ENCODE measurements at regions of chr2 and their contacts with region 1.

Region 1: DNA sequence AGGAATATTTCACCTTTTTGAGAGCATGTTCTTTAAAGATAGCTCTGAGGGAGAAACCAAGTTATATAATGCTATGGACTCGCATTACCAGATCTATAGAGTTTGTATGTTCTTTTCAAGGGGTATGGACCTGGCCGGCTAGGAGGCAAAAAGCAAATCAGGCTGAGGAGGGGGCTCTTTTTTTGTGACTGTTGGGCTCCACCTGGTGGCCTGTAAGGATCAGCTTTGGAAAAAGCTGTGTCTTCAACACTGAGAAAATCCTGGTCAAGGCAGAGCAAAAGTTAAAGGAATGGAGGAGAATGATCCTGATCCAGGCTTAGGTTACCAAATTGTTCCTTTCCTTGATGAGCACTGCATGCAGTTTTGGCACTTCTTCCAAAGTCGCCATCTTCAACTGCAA is 180.5 kb downstream of the DIS3L2 start:
- DNase-seq: peak; percentile 68
- H3K4me3 Mint-ChIP-seq: no peak overlapping the region
- H3K27ac Mint-ChIP-seq: no peak overlapping the region
- H3K4me1 Mint-ChIP-seq: peaks cover 10% of the 10 kb centered on the region
- H3K27me3 Mint-ChIP-seq: no peaks in the 10 kb centered on the region

Region 2: GRCh38 chr2:231900972-231901371 is 241.1 kb before region 1 on chr2:
- intact Hi-C with region 1: loop called (anchors 1 kb)
- DNase-seq: no peak
- H3K4me3 Mint-ChIP-seq: no peak overlapping the region
- H3K27ac Mint-ChIP-seq: no peak overlapping the region
- H3K4me1 Mint-ChIP-seq: no peaks in the 10 kb centered on the region
- H3K27me3 Mint-ChIP-seq: peaks cover 6% of the 10 kb centered on the region

Region 3: DNA sequence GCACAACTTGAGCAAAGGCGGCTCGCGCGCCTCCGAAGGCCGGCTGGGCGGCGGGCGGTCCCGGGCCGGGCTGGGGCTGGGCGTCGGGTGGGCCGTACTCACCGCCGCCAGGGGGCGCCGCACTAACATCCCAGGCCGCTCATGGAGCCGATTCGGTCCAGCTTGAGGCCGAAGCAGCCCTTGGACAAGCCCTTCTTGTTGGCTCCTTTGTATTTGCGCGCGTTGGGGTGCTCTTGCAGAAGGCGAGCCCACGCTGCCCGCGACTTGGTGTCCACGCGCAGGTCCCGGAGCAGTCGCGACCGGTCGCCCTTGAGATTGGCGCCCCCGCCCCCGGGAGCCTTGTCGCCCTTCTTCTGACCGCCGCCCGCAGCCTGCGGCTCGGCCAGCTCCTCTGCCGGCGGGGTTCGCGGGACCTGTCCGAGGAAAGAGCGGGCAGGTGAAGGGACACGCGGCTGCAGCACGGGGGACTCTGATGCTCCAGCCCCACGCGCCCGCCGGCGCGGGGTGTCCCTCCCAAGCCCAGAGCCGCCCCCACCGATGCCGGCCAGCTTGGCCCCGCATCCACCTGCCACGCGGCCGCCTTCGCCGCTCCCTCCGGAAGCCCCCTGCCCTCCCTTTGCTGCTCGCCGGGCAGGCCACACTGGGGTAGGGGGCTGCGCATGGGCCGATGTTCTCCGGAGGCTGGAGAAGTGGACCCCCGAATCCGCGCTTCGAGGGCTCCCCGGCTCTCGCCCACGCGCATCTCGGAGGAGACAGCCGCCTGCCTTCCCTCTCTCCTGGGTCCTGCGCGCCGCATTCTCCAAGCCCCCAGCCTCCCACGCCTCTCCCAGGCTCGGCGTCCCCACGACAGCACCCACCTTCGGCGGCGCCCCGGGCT is 216.5 kb before region 1 on chr2:
- intact Hi-C with region 1: loop called (anchors 1 kb)
- DNase-seq: peak; percentile 91
- H3K4me3 Mint-ChIP-seq: peak overlapping the region; percentile 51
- H3K27ac Mint-ChIP-seq: no peak overlapping the region
- H3K4me1 Mint-ChIP-seq: peaks cover 10% of the 10 kb centered on the region
- H3K27me3 Mint-ChIP-seq: peaks cover 53% of the 10 kb centered on the region

Region 4: DNA sequence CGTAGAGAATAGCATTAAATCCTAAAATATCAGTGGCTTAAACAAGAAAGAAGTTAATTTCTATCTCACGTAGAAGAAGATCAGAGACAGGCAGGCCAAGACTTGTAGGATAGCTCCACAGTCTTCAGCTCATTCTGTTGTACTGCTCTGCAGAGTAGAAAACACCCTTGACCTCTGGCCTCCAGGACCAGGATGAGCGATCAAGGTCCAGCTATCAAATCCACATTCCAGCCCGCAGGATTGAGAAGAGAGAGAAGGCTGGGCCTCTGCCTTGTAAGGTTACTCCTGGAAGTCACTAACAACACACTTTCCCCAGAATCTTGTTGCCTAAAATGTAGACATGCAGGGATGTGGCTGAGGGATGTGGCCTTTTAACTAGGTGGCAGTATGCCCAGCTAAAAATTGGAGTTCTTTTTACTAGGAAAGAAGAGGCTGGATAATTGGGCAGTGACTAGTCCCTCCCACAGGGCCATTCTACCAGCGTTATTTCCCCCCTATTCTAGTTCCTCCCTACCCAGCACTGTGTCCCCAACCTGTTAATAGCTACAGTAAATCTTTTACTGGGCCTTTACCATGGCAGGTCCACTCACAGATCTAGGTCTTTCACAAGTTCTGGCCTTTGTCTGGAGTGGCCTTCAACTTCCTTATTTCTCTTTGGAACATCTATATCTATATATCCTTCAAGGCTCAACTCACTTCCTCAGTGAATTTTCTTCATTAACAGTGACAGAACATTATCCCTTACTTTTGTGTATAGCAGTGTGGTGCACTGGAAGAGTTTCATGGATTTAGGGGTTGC is 15.5 kb before region 1 on chr2:
- intact Hi-C with region 1: no loop called
- DNase-seq: no peak
- H3K4me3 Mint-ChIP-seq: no peak overlapping the region
- H3K27ac Mint-ChIP-seq: no peak overlapping the region
- H3K4me1 Mint-ChIP-seq: peaks cover 2% of the 10 kb centered on the region
- H3K27me3 Mint-ChIP-seq: no peaks in the 10 kb centered on the region

Region 5: GRCh38 chr2:232327105-232328041 is 185.3 kb after region 1 on chr2:
- intact Hi-C with region 1: loop called (anchors 10 kb)
- DNase-seq: peak; percentile 96
- H3K4me3 Mint-ChIP-seq: no peak overlapping the region
- H3K27ac Mint-ChIP-seq: no peak overlapping the region
- H3K4me1 Mint-ChIP-seq: peaks cover 6% of the 10 kb centered on the region
- H3K27me3 Mint-ChIP-seq: no peaks in the 10 kb centered on the region